ENCODE measurements at regions of chr17 and their contacts with region 1.

Region 1: GRCh38 chr17:29369831-29370735 is 20.1 kb upstream of the TAOK1 start:
- DNase-seq: peak; percentile 55
- H3K4me3 ChIP-seq: peak overlapping the region; percentile 44
- H3K27ac ChIP-seq: peak overlapping the region; percentile 34
- H3K27me3 ChIP-seq: no peaks in the 10 kb centered on the region
- CTCF ChIP-seq: peak; percentile 65

Region 2: DNA sequence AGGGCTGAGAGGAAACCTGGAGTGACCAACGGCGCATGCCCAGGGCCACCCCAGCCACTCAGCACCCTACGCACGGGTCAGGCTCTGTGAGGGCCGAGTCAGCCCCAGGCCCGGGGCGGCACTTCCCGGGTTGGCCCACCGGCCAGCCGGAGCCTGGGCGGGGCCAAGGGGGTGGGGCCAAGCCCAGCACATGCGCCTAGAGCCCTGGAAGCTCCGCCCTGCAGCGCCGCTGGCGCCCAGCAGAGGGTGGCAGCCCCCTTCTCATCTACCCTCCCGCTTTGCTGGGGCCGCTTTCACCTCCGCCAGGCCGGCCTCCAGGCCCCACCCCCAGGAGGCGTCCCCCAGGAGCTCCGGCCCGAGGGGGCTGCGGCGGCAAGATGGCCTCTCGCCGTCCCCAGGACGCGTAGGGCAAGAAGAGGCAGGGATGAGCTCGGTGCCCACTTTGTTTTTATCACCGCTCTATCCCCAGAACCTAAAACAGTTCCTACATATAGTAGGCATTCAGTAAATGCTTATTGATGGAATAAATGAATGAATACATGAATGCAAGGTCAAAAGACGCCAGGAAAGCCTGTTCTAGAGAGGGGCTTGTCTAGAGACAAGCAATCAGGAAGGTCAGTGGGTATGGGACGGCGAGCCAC is 221.2 kb before region 1 on chr17:
- CTCF ChIA-PET with region 1: interaction called, 15 read pairs
- POLR2A ChIA-PET with region 1: no interaction called
- DNase-seq: peak; percentile 79
- H3K4me3 ChIP-seq: peak overlapping the region; percentile 56
- H3K27ac ChIP-seq: peak overlapping the region; percentile 47
- H3K27me3 ChIP-seq: no peaks in the 10 kb centered on the region
- CTCF ChIP-seq: peak; percentile 88

Region 3: GRCh38 chr17:29399634-29400033 is 29.6 kb after region 1 on chr17:
- CTCF ChIA-PET with region 1: interaction called, 12 read pairs
- POLR2A ChIA-PET with region 1: no interaction called
- DNase-seq: no peak
- H3K4me3 ChIP-seq: no peak overlapping the region
- H3K27ac ChIP-seq: no peak overlapping the region
- H3K27me3 ChIP-seq: no peaks in the 10 kb centered on the region
- CTCF ChIP-seq: no peak

Region 4: GRCh38 chr17:29483503-29483902 is 113.4 kb after region 1 on chr17:
- CTCF ChIA-PET with region 1: interaction called, 23 read pairs
- POLR2A ChIA-PET with region 1: no interaction called
- DNase-seq: no peak
- H3K4me3 ChIP-seq: no peak overlapping the region
- H3K27ac ChIP-seq: no peak overlapping the region
- H3K27me3 ChIP-seq: no peaks in the 10 kb centered on the region
- CTCF ChIP-seq: no peak

Region 5: GRCh38 chr17:29533976-29534375 is 163.9 kb after region 1 on chr17:
- CTCF ChIA-PET with region 1: interaction called, 73 read pairs
- POLR2A ChIA-PET with region 1: no interaction called
- DNase-seq: no peak
- H3K4me3 ChIP-seq: no peak overlapping the region
- H3K27ac ChIP-seq: no peak overlapping the region
- H3K27me3 ChIP-seq: no peaks in the 10 kb centered on the region
- CTCF ChIP-seq: no peak

Region 6: DNA sequence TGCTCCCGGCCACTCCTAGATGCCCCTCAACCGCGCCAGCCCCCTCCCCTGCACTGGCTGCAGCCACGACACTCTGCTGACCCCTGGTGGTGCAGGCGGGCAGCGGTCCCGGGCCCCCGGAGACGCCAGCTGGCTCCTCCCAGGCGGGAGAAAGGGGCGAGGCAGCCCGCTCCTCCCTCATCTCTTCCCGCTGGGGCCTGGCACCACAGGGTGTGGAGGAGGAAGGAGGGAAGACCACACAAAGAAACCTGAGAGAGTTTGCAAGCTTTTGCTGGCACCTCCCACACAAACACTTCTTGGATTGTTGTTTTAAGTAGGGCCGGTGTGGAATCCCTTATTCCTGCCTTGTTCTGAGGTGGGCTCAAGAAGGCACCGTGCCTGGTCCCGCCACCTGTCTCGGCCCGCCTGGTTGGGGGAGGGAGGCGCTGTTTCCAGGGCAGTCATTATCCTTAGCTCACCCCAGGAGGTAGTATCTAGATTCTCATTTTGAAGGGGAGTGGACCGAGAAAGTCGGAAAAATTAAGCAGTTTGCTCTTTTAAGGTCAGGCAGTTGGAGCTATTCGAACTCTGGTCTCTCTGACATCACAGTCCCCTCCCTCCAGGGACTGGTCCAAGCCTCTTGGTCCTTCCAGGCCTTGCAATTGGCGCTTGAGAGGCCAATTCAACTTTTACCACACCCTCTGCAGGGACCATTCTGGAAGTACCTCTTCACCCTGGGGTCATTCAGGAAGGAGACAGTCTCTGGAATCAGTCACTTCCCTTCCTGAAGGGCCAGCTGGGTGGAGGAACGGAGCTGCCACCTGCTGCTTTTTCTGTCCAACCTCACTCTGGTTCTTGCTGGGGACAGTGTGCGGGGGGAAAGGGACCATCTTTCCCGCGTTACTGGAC is 221.9 kb after region 1 on chr17:
- CTCF ChIA-PET with region 1: interaction called, 18 read pairs
- POLR2A ChIA-PET with region 1: no interaction called
- DNase-seq: no peak
- H3K4me3 ChIP-seq: peak overlapping the region; percentile 44
- H3K27ac ChIP-seq: peak overlapping the region; percentile 65
- H3K27me3 ChIP-seq: no peaks in the 10 kb centered on the region
- CTCF ChIP-seq: peak; percentile 98

Measured in AG04450 (cell line).